ENCODE measurements at regions of chr6 and their contacts with region 1.

Region 1: GRCh38 chr6:128443553-128443952 is 76.8 kb downstream of the PTPRK start:
- DNase-seq: no peak

Region 2: DNA sequence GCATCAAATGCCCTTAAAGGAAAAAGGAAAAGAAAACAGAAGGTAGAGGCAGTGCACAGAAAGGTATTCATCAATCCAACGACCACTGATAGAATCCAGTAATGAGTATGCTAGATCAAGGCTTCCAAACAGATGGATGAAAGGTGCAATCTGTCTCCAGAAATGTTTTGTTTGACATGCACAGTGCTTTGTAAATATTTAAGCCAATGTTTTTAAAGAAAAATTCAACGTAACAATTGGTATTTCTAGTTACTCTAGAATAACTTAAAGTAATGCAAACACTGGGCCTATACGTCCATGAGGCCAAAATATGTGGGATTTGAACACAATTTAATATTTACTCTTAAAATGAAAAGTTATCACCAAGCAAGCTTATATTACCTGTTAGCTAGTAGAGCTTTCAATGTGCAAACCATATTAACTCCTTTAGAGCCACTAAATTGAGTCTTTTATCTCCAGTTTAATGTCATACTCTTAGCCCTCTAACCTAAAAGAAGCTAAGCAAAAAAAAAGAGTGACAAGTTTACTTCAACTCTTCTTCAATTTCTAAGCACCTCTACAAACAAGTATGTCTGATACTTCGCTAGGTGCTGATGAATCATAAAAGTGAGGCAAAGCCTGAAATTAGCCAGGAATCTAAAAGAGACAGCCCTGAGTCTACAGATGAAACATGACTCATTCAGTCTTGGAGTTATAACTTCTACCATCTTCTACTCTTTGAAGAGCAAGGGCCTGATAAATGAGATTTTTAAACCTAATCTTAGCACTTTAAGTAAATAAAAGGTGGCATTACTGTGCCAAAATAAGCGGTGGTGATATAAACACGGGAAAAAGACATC is 92.9 kb before region 1 on chr6:
- CTCF ChIA-PET with region 1: no interaction called
- POLR2A ChIA-PET with region 1: no interaction called
- DNase-seq: no peak

Region 3: GRCh38 chr6:128493877-128494276 is 50.3 kb after region 1 on chr6:
- CTCF ChIA-PET with region 1: no interaction called
- POLR2A ChIA-PET with region 1: no interaction called
- DNase-seq: no peak

Region 4: GRCh38 chr6:128641701-128642100 is 198.1 kb after region 1 on chr6:
- CTCF ChIA-PET with region 1: interaction called, 10 read pairs
- POLR2A ChIA-PET with region 1: no interaction called
- DNase-seq: no peak

Measured in HEK293T (cell line).